Activated T-helper 1 cell treated with anti-CD3 and anti-CD28 coated beads, Interleukin-12 subunit alpha, Interleukin-12 subunit beta, Interleukin-2, Interleukin-4 antibody, amounts not matched to agents 30 ng/mL and 10 ng/mL and 1 ng/mL, durations not matched to agents 14 hours and 24 hours and 36 hours (primary cell): ENCODE measurements at regions of chr15 and their contacts with region 1.

Region 1: GRCh38 chr15:75104804-75105535 is 81.6 kb downstream of the PPCDC start:
- DNase-seq: peak; percentile 55
- H3K4me3 Mint-ChIP-seq: peak overlapping the region; percentile 28
- H3K27ac Mint-ChIP-seq: peak overlapping the region; percentile 89
- H3K4me1 Mint-ChIP-seq: peaks cover 52% of the 10 kb centered on the region
- H3K27me3 Mint-ChIP-seq: peaks cover 5% of the 10 kb centered on the region

Region 2: DNA sequence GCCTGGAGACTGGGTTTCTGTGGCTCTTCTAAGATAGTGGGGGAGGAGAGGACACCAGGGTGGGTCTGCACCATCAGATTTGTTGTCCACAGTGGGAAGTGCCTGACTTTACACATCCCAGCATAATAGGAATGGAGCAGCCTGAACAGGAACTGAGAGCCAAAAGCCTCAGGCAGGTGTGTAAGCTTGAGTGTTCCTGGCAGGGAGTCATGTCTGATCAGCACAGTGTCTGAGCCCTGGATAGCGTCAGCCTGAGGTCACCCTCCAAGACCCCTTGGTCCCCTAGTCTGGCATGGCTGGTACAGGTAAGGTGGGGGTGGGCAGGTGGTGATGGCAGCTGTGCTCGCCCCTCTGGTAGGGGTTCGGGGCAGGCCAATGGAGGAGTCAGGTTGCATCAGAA is 1372.0 kb before region 1 on chr15:
- intact Hi-C with region 1: no loop called
- DNase-seq: no peak
- H3K4me3 Mint-ChIP-seq: no peak overlapping the region
- H3K27ac Mint-ChIP-seq: no peak overlapping the region
- H3K4me1 Mint-ChIP-seq: no peaks in the 10 kb centered on the region
- H3K27me3 Mint-ChIP-seq: no peaks in the 10 kb centered on the region

Region 3: GRCh38 chr15:75042730-75043508 is 62.1 kb before region 1 on chr15:
- intact Hi-C with region 1: loop called (anchors 2 kb)
- DNase-seq: peak; percentile 71
- H3K4me3 Mint-ChIP-seq: peak overlapping the region; percentile 41
- H3K27ac Mint-ChIP-seq: peak overlapping the region; percentile 77
- H3K4me1 Mint-ChIP-seq: peaks cover 87% of the 10 kb centered on the region
- H3K27me3 Mint-ChIP-seq: no peaks in the 10 kb centered on the region

Region 4: DNA sequence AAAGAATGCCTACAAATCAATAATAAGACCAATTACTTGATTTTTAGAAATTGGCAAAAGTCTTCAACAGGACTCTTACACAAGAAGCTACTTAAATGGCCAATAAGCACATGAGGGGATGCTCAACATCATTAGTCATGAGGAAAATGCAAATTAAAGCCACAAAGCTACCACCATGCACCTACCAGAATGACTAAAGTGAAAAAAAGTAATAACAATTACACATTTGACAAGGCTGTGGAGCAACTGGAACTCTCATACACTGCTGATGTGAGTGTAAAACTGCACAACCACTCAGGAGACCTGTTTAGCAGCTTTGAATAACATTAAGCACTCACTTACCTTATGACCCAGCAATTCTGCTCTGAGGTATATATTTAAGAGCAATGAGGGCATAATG is 13.2 kb before region 1 on chr15:
- intact Hi-C with region 1: loop called (anchors 1 kb)
- DNase-seq: no peak
- H3K4me3 Mint-ChIP-seq: no peak overlapping the region
- H3K27ac Mint-ChIP-seq: peak overlapping the region; percentile 42
- H3K4me1 Mint-ChIP-seq: peaks cover 28% of the 10 kb centered on the region
- H3K27me3 Mint-ChIP-seq: peaks cover 8% of the 10 kb centered on the region

Region 5: GRCh38 chr15:75117993-75118392 is 13.0 kb after region 1 on chr15:
- intact Hi-C with region 1: no loop called
- DNase-seq: no peak
- H3K4me3 Mint-ChIP-seq: no peak overlapping the region
- H3K27ac Mint-ChIP-seq: no peak overlapping the region
- H3K4me1 Mint-ChIP-seq: peaks cover 9% of the 10 kb centered on the region
- H3K27me3 Mint-ChIP-seq: peaks cover 19% of the 10 kb centered on the region

Region 6: GRCh38 chr15:75606711-75607699 is 502.0 kb after region 1 on chr15:
- intact Hi-C with region 1: no loop called
- DNase-seq: peak; percentile 15
- H3K4me3 Mint-ChIP-seq: peak overlapping the region; percentile 64
- H3K27ac Mint-ChIP-seq: peak overlapping the region; percentile 85
- H3K4me1 Mint-ChIP-seq: peaks cover 41% of the 10 kb centered on the region
- H3K27me3 Mint-ChIP-seq: no peaks in the 10 kb centered on the region